ENCODE measurements at regions of chr7 and their contacts with region 1.

Region 1: DNA sequence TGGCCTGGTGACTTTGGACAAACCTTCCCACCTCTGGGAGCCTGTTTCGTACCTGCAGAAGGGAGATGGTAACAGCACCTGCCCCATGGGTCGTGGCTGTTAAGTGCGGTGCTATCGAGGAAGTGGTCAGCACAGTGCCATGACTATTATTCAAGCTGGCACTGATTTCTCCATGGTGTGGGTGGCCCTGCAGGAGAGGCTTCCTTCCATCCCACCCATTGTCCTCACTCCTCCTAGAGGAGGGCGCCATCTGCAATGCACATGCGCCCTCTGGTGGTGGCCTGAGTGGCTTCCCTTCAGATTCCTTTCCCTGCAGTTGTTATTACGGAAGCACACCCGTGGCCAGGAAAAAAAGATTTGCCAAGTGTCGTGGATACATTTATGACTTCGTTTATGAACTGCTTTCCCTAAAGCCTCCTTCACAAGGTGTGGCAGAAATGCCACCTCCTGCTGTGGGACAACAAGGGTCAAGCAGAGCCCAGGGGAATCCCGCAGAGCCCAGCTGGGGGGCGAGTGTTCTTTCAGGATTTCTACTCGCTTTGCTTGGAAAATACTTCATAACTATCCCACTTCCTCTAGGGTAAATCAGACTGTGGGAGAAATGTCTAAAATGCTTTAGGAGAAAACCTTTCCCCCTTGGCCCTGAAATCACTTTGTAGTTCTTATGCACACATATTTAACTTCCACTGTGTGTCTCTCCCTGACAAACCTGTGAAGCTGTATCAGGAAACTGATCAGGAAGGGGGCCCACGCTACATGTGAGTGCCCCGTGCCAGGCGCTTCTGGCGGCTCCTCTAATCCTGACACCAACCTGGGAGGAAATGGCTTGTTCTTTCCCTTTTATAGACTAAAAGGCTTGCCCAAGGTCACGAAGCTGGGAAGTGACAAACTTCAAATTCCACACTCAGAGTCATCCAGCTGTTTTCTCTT is 98.0 kb upstream of the ANLN start:
- DNase-seq: peak; percentile 84 to 90 (median 88)
- ATAC-seq: peak; percentile 98
- H3K4me3 ChIP-seq: no peak overlapping the region
- H3K27ac ChIP-seq: no peak overlapping the region
- H3K4me1 ChIP-seq: 0 out of 5 replicates have a peak, but pooled peaks cover 0 to 1% of the 10 kb centered on the region in 2 experiments
- H3K27me3 ChIP-seq: peaks cover 18 to 45% of the 10 kb centered on the region in 2 experiments
- CTCF ChIP-seq: peak; percentile 97 to 98 (median 98)
- EP300 ChIP-seq: no peak
- POLR2A ChIP-seq: no peak
- RAD21 ChIP-seq: peak; percentile 99 to 100

Region 2: GRCh38 chr7:35985126-35985754 is 306.4 kb before region 1 on chr7:
- CTCF ChIA-PET with region 1: interaction called, 58 read pairs
- POLR2A ChIA-PET with region 1: interaction called, 4 read pairs
- in situ Hi-C with region 1: loop called (anchors 5 kb)
- intact Hi-C with region 1: loop called (anchors 1 kb)
- DNase-seq: peak; percentile 70 to 74 (median 72)
- ATAC-seq: peak; percentile 99
- H3K4me3 ChIP-seq: no peak overlapping the region
- H3K27ac ChIP-seq: no peak overlapping the region
- H3K4me1 ChIP-seq: peaks cover 0 to 5% of the 10 kb centered on the region in 2 experiments; a peak in 2 of 5 replicates
- H3K27me3 ChIP-seq: peaks cover 18 to 59% of the 10 kb centered on the region in 2 experiments
- CTCF ChIP-seq: peak; percentile 86 to 93 (median 90)
- EP300 ChIP-seq: no peak
- POLR2A ChIP-seq: no peak
- RAD21 ChIP-seq: peak; percentile 98

Region 3: GRCh38 chr7:36084475-36085097 is 207.1 kb before region 1 on chr7:
- CTCF ChIA-PET with region 1: no interaction called
- POLR2A ChIA-PET with region 1: no interaction called
- in situ Hi-C with region 1: no loop called
- intact Hi-C with region 1: loop called (anchors 1 kb)
- DNase-seq: peak; percentile 37 to 52 (median 45)
- ATAC-seq: peak; percentile 88
- H3K4me3 ChIP-seq: no peak overlapping the region
- H3K27ac ChIP-seq: no peak overlapping the region
- H3K4me1 ChIP-seq: peaks cover 0 to 11% of the 10 kb centered on the region in 2 experiments; a peak in 2 of 5 replicates
- H3K27me3 ChIP-seq: peaks cover 12 to 49% of the 10 kb centered on the region in 2 experiments
- CTCF ChIP-seq: peak; percentile 35 to 55 (median 54)
- EP300 ChIP-seq: no peak
- POLR2A ChIP-seq: no peak
- RAD21 ChIP-seq: peak; percentile 49 to 64; a peak in 3 of 4 replicates

Region 4: GRCh38 chr7:36348256-36348655 is 56.6 kb after region 1 on chr7:
- CTCF ChIA-PET with region 1: no interaction called
- POLR2A ChIA-PET with region 1: no interaction called
- in situ Hi-C with region 1: no loop called
- intact Hi-C with region 1: no loop called
- DNase-seq: no peak
- ATAC-seq: no peak
- H3K4me3 ChIP-seq: no peak overlapping the region
- H3K27ac ChIP-seq: no peak overlapping the region
- H3K4me1 ChIP-seq: no peaks in the 10 kb centered on the region
- H3K27me3 ChIP-seq: peaks cover 5 to 6% of the 10 kb centered on the region in 2 experiments; a peak in 4 of 5 replicates
- CTCF ChIP-seq: no peak
- EP300 ChIP-seq: no peak
- POLR2A ChIP-seq: no peak
- RAD21 ChIP-seq: no peak

Region 5: DNA sequence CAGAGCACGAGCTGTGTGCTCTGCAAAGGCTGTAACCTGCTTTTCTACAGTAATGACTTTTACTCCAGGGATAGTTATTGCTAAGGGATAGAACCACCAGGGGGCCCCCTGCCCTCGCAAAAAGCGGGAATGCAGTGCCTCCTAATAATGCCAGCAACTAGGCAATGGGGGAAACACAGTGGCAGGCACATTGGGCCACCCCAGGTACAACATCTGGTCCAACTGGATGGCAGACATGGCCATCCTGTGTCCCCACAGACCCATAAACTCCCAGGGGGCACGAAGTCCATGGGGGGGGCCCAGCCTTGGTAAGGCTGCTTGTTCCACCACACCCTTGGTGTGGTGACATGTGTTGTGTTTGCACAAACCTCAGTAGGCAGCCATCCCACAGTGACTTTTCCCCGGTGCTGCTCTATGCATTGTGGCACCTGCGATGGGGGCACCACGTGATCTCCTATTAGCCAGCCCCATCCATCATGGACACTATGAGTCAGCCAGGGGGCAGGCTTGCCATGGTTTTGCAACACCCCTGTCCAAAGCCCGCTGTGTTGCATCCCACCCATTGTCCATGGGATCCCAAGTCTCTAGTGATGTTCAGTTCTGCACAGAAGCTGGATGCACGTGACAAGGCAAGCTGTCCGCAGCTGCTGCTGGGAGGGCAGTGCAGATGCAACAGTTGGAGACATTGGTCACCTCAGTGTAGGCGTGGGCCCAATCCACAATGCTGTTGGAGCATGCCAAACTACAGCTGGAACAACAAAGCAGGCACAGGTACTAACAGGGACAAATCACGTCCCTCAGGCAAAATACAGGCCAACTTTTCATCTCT is 182.0 kb after region 1 on chr7:
- CTCF ChIA-PET with region 1: interaction called, 11 read pairs
- POLR2A ChIA-PET with region 1: no interaction called
- in situ Hi-C with region 1: no loop called
- intact Hi-C with region 1: loop called (anchors 2 kb)
- DNase-seq: peak; percentile 51 to 70 (median 58)
- ATAC-seq: peak; percentile 90
- H3K4me3 ChIP-seq: no peak overlapping the region
- H3K27ac ChIP-seq: 0 out of 3 replicates have a peak overlapping the region, but pooled peaks have one; percentile 9
- H3K4me1 ChIP-seq: peaks cover 8 to 12% of the 10 kb centered on the region in 2 experiments; a peak in 3 of 5 replicates
- H3K27me3 ChIP-seq: no peaks in the 10 kb centered on the region; a peak in 1 of 5 replicates
- CTCF ChIP-seq: peak; percentile 81 to 88 (median 83)
- EP300 ChIP-seq: no peak
- POLR2A ChIP-seq: no peak
- RAD21 ChIP-seq: peak; percentile 85 to 91

Region 6: GRCh38 chr7:36670585-36671431 is 379.2 kb after region 1 on chr7:
- CTCF ChIA-PET with region 1: no interaction called
- POLR2A ChIA-PET with region 1: no interaction called
- in situ Hi-C with region 1: loop called (anchors 10 kb)
- intact Hi-C with region 1: no loop called
- DNase-seq: peak; percentile 73 to 80 (median 78)
- ATAC-seq: peak; percentile 99
- H3K4me3 ChIP-seq: no peak overlapping the region
- H3K27ac ChIP-seq: no peak overlapping the region
- H3K4me1 ChIP-seq: no peaks in the 10 kb centered on the region
- H3K27me3 ChIP-seq: peaks cover 0 to 3% of the 10 kb centered on the region in 2 experiments; a peak in 4 of 5 replicates
- CTCF ChIP-seq: peak; percentile 85 to 93 (median 92)
- EP300 ChIP-seq: no peak
- POLR2A ChIP-seq: no peak
- RAD21 ChIP-seq: peak; percentile 61 to 81